Activated CD8-positive, alpha-beta memory T cell treated with anti-CD3 and anti-CD28 coated beads, Interleukin-2, amount 10 ng/mL, durations not matched to agents 7 days and 5 days (primary cell): ENCODE measurements at regions of chr3 and their contacts with region 1.

Region 1: DNA sequence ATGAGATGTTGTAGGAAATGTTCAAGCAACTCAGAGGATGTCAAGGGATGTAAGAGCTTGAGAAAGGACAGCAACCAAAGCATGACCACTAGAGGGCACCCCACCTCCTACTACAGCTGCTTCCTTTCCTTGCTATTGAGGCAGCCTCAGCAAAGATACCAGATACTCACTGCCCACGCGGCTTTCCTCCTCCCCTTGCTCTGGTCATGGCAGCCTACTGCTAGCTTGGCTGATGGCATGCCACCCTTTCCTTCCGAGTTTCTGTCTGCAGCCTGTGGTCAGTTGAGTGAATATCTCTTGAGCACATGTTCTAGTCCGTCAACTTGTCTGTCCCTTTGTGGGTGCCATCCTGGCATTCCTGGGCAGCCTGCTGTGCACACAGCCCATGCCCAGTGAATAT is 4.4 kb upstream of the CXCR6 start:
- DNase-seq: peak; percentile 93
- ATAC-seq: peak; percentile 79
- H3K4me3 Mint-ChIP-seq: no peak overlapping the region
- H3K27ac Mint-ChIP-seq: peak overlapping the region; percentile 57
- H3K4me1 Mint-ChIP-seq: peaks cover 58% of the 10 kb centered on the region
- H3K27me3 Mint-ChIP-seq: no peaks in the 10 kb centered on the region

Region 2: GRCh38 chr3:45760878-45761711 is 177.8 kb before region 1 on chr3:
- CTCF ChIA-PET with region 1: interaction called, 18 read pairs
- DNase-seq: peak; percentile 63
- ATAC-seq: peak; percentile 85
- H3K4me3 Mint-ChIP-seq: no peak overlapping the region
- H3K27ac Mint-ChIP-seq: no peak overlapping the region
- H3K4me1 Mint-ChIP-seq: peaks cover 2% of the 10 kb centered on the region
- H3K27me3 Mint-ChIP-seq: peaks cover 2% of the 10 kb centered on the region

Region 3: DNA sequence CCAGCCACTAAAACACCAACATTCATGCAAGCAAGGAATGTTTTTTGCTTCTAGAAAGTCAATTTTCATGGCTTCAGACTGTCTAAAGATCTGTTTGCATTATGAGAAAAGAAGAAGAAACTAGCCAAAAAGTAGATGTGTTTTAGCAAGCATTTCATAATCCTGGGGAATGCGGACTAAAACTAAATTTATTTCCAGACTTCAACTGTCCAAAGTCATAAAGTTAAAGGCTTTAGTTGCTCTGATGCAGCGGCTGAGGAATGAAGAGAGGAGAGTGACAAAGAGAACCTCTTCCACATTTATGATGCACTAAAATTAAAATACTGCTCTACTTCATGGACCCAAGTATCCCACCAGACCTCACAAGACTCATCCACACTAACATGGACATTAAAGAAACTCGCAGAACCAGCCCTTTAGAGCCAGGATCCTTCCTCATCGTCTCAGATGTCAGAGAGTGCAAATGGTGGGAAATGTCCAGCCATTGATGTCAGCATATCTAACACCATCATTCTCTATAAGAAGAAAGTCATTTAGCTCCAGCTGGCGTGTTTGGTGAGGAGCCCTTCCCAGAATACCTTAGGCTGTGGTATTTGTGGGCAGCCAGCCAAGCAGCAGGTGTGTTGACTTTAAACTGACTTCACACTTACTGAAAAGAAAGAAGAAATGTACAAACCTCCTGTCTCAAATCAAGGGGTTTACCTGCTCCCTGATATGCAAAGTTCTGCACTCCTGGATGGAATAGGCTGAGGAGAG is 39.3 kb after region 1 on chr3:
- CTCF ChIA-PET with region 1: interaction called, 10 read pairs
- DNase-seq: peak; percentile 85
- ATAC-seq: peak; percentile 35
- H3K4me3 Mint-ChIP-seq: peak overlapping the region; percentile 57
- H3K27ac Mint-ChIP-seq: peak overlapping the region; percentile 92
- H3K4me1 Mint-ChIP-seq: peaks cover 92% of the 10 kb centered on the region
- H3K27me3 Mint-ChIP-seq: no peaks in the 10 kb centered on the region

Region 4: GRCh38 chr3:46017720-46018119 is 78.9 kb after region 1 on chr3:
- CTCF ChIA-PET with region 1: no interaction called
- DNase-seq: no peak
- ATAC-seq: no peak
- H3K4me3 Mint-ChIP-seq: no peak overlapping the region
- H3K27ac Mint-ChIP-seq: no peak overlapping the region
- H3K4me1 Mint-ChIP-seq: peaks cover 33% of the 10 kb centered on the region
- H3K27me3 Mint-ChIP-seq: peaks cover 2% of the 10 kb centered on the region

Region 5: GRCh38 chr3:46065294-46065721 is 126.4 kb after region 1 on chr3:
- CTCF ChIA-PET with region 1: interaction called, 13 read pairs
- DNase-seq: peak; percentile 71
- ATAC-seq: peak; percentile 70
- H3K4me3 Mint-ChIP-seq: no peak overlapping the region
- H3K27ac Mint-ChIP-seq: peak overlapping the region; percentile 16
- H3K4me1 Mint-ChIP-seq: peaks cover 47% of the 10 kb centered on the region
- H3K27me3 Mint-ChIP-seq: peaks cover 9% of the 10 kb centered on the region